ENCODE measurements at regions of chr2 and their contacts with region 1.

Region 1: GRCh38 chr2:55973673-55974072 is 50.1 kb upstream of the EFEMP1 start:
- DNase-seq: no peak
- ATAC-seq: no peak
- H3K4me3 ChIP-seq: no peak overlapping the region
- H3K27ac ChIP-seq: no peak overlapping the region
- H3K4me1 ChIP-seq: no peaks in the 10 kb centered on the region
- H3K27me3 ChIP-seq: peaks cover 0 to 4% (median 0%) of the 10 kb centered on the region in 7 donors
- CTCF ChIP-seq: no peak

Region 2: GRCh38 chr2:55986700-55987440 is 13.2 kb after region 1 on chr2:
- intact Hi-C with region 1: loop called in 1 of 10 experiments (anchors 2 kb)
- DNase-seq: no peak
- ATAC-seq: no peak
- H3K4me3 ChIP-seq: no peak overlapping the region
- H3K27ac ChIP-seq: no peak overlapping the region
- H3K4me1 ChIP-seq: no peaks in the 10 kb centered on the region
- H3K27me3 ChIP-seq: no peaks in the 10 kb centered on the region
- CTCF ChIP-seq: no peak

Region 3: GRCh38 chr2:56313500-56313921 is 339.8 kb after region 1 on chr2:
- intact Hi-C with region 1: no loop called
- DNase-seq: no peak
- ATAC-seq: no peak
- H3K4me3 ChIP-seq: no peak overlapping the region
- H3K27ac ChIP-seq: peak overlapping the region in 9 of 10 donors; percentile 26 to 82 (median 46)
- H3K4me1 ChIP-seq: peaks cover 0 to 51% (median 12%) of the 10 kb centered on the region in 9 donors
- H3K27me3 ChIP-seq: no peaks in the 10 kb centered on the region
- CTCF ChIP-seq: no peak

Region 4: GRCh38 chr2:57622009-57622408 is 1648.3 kb after region 1 on chr2:
- intact Hi-C with region 1: no loop called
- DNase-seq: no peak
- ATAC-seq: no peak
- H3K4me3 ChIP-seq: no peak overlapping the region
- H3K27ac ChIP-seq: no peak overlapping the region
- H3K4me1 ChIP-seq: no peaks in the 10 kb centered on the region
- H3K27me3 ChIP-seq: no peaks in the 10 kb centered on the region
- CTCF ChIP-seq: no peak